ENCODE measurements at regions of chr1 and their contacts with region 1.

Region 1: DNA sequence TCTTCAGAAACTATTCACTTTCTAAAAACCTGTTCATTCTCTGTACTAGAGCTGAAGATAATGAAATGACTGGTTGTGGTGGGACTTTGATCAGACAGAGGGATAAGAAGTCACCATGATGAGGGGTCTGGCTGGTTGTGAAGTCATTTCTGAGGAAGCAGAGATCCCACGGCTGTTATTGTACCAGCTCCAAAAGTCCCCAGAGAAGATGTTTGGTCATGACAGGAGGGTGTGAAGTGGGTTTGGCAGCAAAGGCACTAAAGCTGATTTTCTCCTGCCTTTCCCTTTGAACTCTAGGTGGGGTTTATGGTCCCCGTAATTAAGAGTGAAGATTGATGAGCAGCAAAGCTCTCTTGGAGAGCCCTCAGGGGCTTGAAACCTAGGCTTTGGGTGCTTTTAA is 103.1 kb upstream of the CACHD1 start:
- DNase-seq: no peak
- H3K4me3 ChIP-seq: no peak overlapping the region
- H3K27ac ChIP-seq: no peak overlapping the region
- H3K4me1 ChIP-seq: no peaks in the 10 kb centered on the region
- H3K27me3 ChIP-seq: no peaks in the 10 kb centered on the region
- CTCF ChIP-seq: no peak

Region 2: DNA sequence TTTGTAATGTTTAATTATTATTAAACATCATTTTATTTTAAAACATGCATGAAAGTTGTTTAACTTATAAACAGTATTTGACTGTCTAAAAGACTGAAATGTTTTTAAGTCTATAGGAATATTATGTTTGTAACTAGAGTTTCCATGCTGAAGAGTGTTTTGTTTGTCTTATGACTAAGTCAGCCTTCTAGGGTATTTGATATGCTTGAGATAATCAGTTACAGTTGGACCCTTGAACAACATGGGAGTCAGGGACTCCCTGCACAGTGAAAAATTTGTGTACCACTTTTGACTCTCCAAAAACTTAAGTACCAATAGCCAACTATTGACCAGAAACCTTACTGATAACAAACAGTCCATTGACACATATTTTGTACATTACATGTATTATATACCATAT is 2002.1 kb before region 1 on chr1:
- intact Hi-C with region 1: no loop called
- DNase-seq: no peak
- H3K4me3 ChIP-seq: no peak overlapping the region
- H3K27ac ChIP-seq: no peak overlapping the region
- H3K4me1 ChIP-seq: no peaks in the 10 kb centered on the region
- H3K27me3 ChIP-seq: peaks cover 0 to 3% of the 10 kb centered on the region in 2 donors
- CTCF ChIP-seq: no peak

Region 3: DNA sequence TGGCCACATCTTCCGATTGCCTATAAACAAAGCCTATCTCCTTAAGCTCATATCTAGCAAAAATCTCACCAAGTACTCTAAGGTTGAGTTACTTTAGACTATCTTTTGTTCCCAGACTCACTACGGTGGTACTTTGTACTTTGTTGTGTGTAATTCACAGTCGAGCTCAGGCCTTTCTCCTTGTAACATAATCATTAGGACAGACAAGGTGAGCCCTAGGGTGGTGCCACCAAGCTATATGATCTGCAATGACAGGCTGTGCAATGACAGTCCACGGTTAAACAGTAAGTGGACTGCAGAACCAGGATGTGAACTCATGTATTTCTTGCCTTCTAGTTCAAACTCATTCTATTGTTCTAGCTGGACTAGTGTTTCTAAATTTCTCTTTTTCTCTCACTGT is 31.2 kb before region 1 on chr1:
- intact Hi-C with region 1: loop called (anchors 1 kb)
- DNase-seq: no peak
- H3K4me3 ChIP-seq: no peak overlapping the region
- H3K27ac ChIP-seq: no peak overlapping the region
- H3K4me1 ChIP-seq: no peaks in the 10 kb centered on the region
- H3K27me3 ChIP-seq: no peaks in the 10 kb centered on the region
- CTCF ChIP-seq: no peak